HCT116 (cell line): ENCODE measurements at regions of chr18 and their contacts with region 1.

Region 1: DNA sequence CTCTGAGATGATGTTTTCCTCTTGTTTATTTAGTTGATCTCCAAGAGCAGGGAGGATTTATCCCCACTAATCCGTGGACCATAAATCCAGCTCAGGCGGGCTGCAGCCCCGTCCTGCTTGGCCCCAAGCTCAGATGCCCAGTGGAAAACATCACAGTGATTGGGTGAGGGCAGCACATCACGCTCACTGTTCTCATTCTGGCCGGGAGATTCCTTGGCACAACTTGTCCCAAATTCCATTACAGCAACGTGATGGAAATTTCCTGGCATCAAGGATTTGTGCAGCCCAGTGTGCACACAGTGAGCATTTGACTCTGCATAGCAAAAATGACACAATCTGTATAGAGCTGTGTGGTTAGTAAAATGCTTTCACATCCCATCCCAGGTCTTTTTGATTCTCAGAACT is 96.8 kb downstream of the VAPA start:
- DNase-seq: no peak
- ATAC-seq: no peak
- H3K4me3 ChIP-seq: no peak overlapping the region
- H3K27ac ChIP-seq: no peak overlapping the region
- H3K4me1 ChIP-seq: peaks cover 2 to 8% of the 10 kb centered on the region in 2 experiments; a peak in 2 of 4 replicates
- H3K27me3 ChIP-seq: 0 out of 2 replicates have a peak, but pooled peaks cover 3% of the 10 kb centered on the region
- CTCF ChIP-seq: no peak
- POLR2A ChIP-seq: no peak
- RAD21 ChIP-seq: no peak

Region 2: GRCh38 chr18:10067553-10068295 is 57.1 kb after region 1 on chr18:
- CTCF ChIA-PET with region 1: no interaction called
- POLR2A ChIA-PET with region 1: no interaction called
- RAD21 ChIA-PET with region 1: no interaction called
- intact Hi-C with region 1: loop called (anchors 5 kb)
- DNase-seq: no peak
- ATAC-seq: no peak
- H3K4me3 ChIP-seq: no peak overlapping the region
- H3K27ac ChIP-seq: no peak overlapping the region
- H3K4me1 ChIP-seq: no peaks in the 10 kb centered on the region
- H3K27me3 ChIP-seq: peaks cover 11% of the 10 kb centered on the region; the same call in 1 of the 2 replicates
- CTCF ChIP-seq: no peak
- POLR2A ChIP-seq: no peak
- RAD21 ChIP-seq: no peak